HepG2 (cell line): ENCODE measurements at regions of chr4 and their contacts with region 1.

Region 1: GRCh38 chr4:109998867-109999584 is 86.3 kb downstream of the EGF start:
- DNase-seq: peak; percentile 73
- ATAC-seq: peak; percentile 95
- H3K4me3 ChIP-seq: no peak overlapping the region
- H3K27ac ChIP-seq: no peak overlapping the region
- H3K4me1 ChIP-seq: peaks cover 8% of the 10 kb centered on the region; the same call in 1 of the 2 replicates
- H3K27me3 ChIP-seq: no peaks in the 10 kb centered on the region
- CTCF ChIP-seq: peak; percentile 79
- EP300 ChIP-seq: no peak
- POLR2A ChIP-seq: no peak
- RAD21 ChIP-seq: peak; percentile 72

Region 2: GRCh38 chr4:109658871-109659410 is 340.1 kb before region 1 on chr4:
- CTCF ChIA-PET with region 1: no interaction called
- POLR2A ChIA-PET with region 1: no interaction called
- in situ Hi-C with region 1: no loop called
- intact Hi-C with region 1: no loop called
- DNase-seq: no peak
- ATAC-seq: no peak
- H3K4me3 ChIP-seq: no peak overlapping the region
- H3K27ac ChIP-seq: no peak overlapping the region
- H3K4me1 ChIP-seq: peaks cover 8% of the 10 kb centered on the region
- H3K27me3 ChIP-seq: no peaks in the 10 kb centered on the region
- CTCF ChIP-seq: 0 out of 2 replicates have a peak, but pooled peaks have one; percentile 7
- EP300 ChIP-seq: no peak
- POLR2A ChIP-seq: no peak
- RAD21 ChIP-seq: no peak

Region 3: DNA sequence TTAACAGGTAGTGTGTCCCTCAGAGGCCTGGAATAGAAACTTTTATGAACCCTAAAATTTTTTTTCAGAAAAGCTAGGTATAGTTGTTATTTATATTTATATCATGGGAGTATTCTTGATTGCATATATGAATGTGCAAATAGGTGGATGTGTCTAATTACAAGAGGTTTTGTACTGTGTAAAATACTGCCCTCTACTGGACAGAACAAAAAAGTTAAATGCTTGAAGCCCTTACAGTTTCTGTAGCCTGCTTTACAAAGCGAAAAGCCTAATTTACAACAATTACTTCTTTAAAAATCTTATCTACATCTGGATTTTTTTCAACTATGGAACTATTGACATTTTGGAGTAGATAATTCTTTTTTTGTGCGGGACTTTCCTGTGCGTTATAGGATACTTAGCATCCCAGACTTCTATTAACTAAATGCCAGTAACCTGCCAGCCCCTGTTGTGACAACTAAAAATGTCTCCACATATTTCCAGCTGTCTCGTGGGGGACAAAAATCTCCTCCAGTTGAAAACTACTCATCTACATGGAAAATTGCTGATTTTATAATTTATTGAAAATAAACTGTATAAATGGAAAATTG is 512.0 kb after region 1 on chr4:
- CTCF ChIA-PET with region 1: interaction called, 100 read pairs
- POLR2A ChIA-PET with region 1: no interaction called
- in situ Hi-C with region 1: no loop called
- intact Hi-C with region 1: loop called (anchors 1 kb)
- DNase-seq: peak; percentile 39
- ATAC-seq: peak; percentile 60
- H3K4me3 ChIP-seq: no peak overlapping the region
- H3K27ac ChIP-seq: no peak overlapping the region
- H3K4me1 ChIP-seq: peaks cover 7% of the 10 kb centered on the region; the same call in 1 of the 2 replicates
- H3K27me3 ChIP-seq: no peaks in the 10 kb centered on the region
- CTCF ChIP-seq: peak; percentile 56
- EP300 ChIP-seq: no peak
- POLR2A ChIP-seq: no peak
- RAD21 ChIP-seq: peak; percentile 21; the same call in 1 of the 2 replicates

Region 4: GRCh38 chr4:111475001-111475400 is 1476.0 kb after region 1 on chr4:
- CTCF ChIA-PET with region 1: no interaction called
- POLR2A ChIA-PET with region 1: no interaction called
- in situ Hi-C with region 1: no loop called
- intact Hi-C with region 1: loop called (anchors 5 kb)
- DNase-seq: peak; percentile 17
- ATAC-seq: peak; percentile 51
- H3K4me3 ChIP-seq: no peak overlapping the region
- H3K27ac ChIP-seq: no peak overlapping the region
- H3K4me1 ChIP-seq: no peaks in the 10 kb centered on the region
- H3K27me3 ChIP-seq: no peaks in the 10 kb centered on the region
- CTCF ChIP-seq: peak; percentile 49
- EP300 ChIP-seq: no peak
- POLR2A ChIP-seq: no peak
- RAD21 ChIP-seq: no peak